ENCODE measurements at regions of chr19 and their contacts with region 1.

Region 1: GRCh38 chr19:48835734-48836088 is 580 bp downstream of the HSD17B14 start:
- DNase-seq: peak; percentile 96
- H3K4me3 ChIP-seq: peak overlapping the region; percentile 3 to 42 (median 20)
- H3K27ac ChIP-seq: peak overlapping the region; percentile 64 to 70 (median 68)
- H3K4me1 ChIP-seq: peaks cover 0 to 19% (median 9%) of the 10 kb centered on the region in 4 donors
- H3K27me3 ChIP-seq: no peaks in the 10 kb centered on the region
- CTCF ChIP-seq: peak; percentile 82 to 97 (median 89)
- EP300 ChIP-seq: no peak
- POLR2A ChIP-seq: peak; percentile 28

Region 2: GRCh38 chr19:48784540-48784939 is 51.2 kb before region 1 on chr19:
- in situ Hi-C with region 1: no loop called
- intact Hi-C with region 1: loop called (anchors 2 kb)
- DNase-seq: no peak
- H3K4me3 ChIP-seq: no peak overlapping the region
- H3K27ac ChIP-seq: no peak overlapping the region
- H3K4me1 ChIP-seq: peaks cover 0 to 22% (median 5%) of the 10 kb centered on the region in 4 donors
- H3K27me3 ChIP-seq: peaks cover 28% of the 10 kb centered on the region
- CTCF ChIP-seq: no peak
- EP300 ChIP-seq: no peak
- POLR2A ChIP-seq: no peak

Region 3: GRCh38 chr19:49182848-49183344 is 347.2 kb after region 1 on chr19:
- in situ Hi-C with region 1: no loop called
- intact Hi-C with region 1: no loop called
- DNase-seq: no peak
- H3K4me3 ChIP-seq: no peak overlapping the region
- H3K27ac ChIP-seq: no peak overlapping the region
- H3K4me1 ChIP-seq: peaks cover 0 to 20% (median 5%) of the 10 kb centered on the region in 4 donors
- H3K27me3 ChIP-seq: no peaks in the 10 kb centered on the region
- CTCF ChIP-seq: no peak
- EP300 ChIP-seq: no peak
- POLR2A ChIP-seq: no peak

Measured in transverse colon (tissue), 4 donors.